CD4-positive, alpha-beta T cell (primary cell): ENCODE measurements at regions of chr2 and their contacts with region 1.

Region 1: DNA sequence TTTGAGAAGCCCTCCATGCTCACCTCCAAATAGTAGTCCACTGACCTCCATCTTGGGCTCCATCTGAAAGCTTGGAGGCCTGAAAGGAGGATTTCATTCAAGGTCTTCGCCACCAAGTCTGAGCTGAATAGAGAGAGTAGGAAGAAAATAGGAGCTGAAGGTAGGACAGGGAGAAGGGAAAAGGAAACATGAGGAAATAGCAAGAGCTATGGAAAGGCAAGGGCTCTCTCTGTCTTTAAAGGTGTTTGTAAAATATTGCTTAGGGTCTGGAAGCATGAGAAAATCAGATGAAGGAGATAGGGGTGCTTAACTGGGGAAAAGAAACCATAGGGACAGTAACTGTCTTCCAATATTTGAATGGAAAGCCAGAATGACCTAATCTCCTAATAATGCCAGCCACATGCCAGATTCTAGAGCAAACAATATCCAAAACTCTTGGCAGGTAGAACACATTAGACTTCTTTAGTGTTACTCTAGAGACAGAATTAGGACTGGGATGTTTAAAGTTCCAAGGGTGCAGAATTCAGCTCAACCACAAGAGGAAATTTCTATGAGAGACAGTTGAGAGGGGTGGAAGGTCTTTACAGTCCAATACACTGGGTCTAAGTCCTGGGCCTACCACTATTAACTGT is 67.4 kb downstream of the NAB1 start:
- DNase-seq: no peak
- ATAC-seq: no peak
- H3K4me3 ChIP-seq: no peak overlapping the region
- H3K4me3 Mint-ChIP-seq: no peak overlapping the region
- H3K27ac ChIP-seq: no peak overlapping the region
- H3K27ac Mint-ChIP-seq: no peak overlapping the region
- H3K4me1 ChIP-seq: no peaks in the 10 kb centered on the region
- H3K4me1 Mint-ChIP-seq: no peaks in the 10 kb centered on the region
- H3K27me3 ChIP-seq: no peaks in the 10 kb centered on the region
- H3K27me3 Mint-ChIP-seq: no peaks in the 10 kb centered on the region
- CTCF ChIP-seq: no peak

Region 2: GRCh38 chr2:190736355-190736754 is 20.1 kb after region 1 on chr2:
- CTCF ChIA-PET with region 1: no interaction called
- POLR2A ChIA-PET with region 1: no interaction called
- intact Hi-C with region 1: loop called in 1 of 2 experiments (anchors 1 kb)
- DNase-seq: no peak
- ATAC-seq: no peak
- H3K4me3 ChIP-seq: no peak overlapping the region
- H3K4me3 Mint-ChIP-seq: no peak overlapping the region
- H3K27ac ChIP-seq: no peak overlapping the region
- H3K27ac Mint-ChIP-seq: no peak overlapping the region
- H3K4me1 ChIP-seq: no peaks in the 10 kb centered on the region
- H3K4me1 Mint-ChIP-seq: no peaks in the 10 kb centered on the region
- H3K27me3 ChIP-seq: no peaks in the 10 kb centered on the region
- H3K27me3 Mint-ChIP-seq: no peaks in the 10 kb centered on the region
- CTCF ChIP-seq: no peak